Prostate gland (tissue), 2 donors: ENCODE measurements at regions of chr12 and their contacts with region 1.

Region 1: DNA sequence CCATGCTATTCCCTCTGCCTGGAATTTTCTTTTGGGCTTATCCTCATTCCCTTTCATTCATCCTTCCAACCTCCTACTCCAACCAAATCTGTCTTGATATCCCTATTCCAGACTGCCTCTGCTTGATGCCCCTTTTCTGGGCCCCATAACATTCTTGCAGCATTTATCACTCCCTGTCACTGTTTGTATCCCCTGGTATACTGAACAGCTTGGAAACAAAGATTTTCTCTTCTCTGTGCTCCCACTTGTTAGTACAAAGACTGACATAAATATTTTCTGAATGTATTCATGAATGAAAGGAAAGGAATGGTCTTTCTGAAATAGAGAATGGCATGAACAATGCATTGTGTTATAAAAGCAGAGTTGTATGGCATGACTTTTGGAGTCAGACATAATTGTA is 7.5 kb downstream of the IRAK4 start:
- DNase-seq: no peak
- H3K4me3 ChIP-seq: no peak overlapping the region
- H3K27ac ChIP-seq: no peak overlapping the region
- H3K4me1 ChIP-seq: no peaks in the 10 kb centered on the region
- H3K27me3 ChIP-seq: no peaks in the 10 kb centered on the region
- CTCF ChIP-seq: no peak
- POLR2A ChIP-seq: no peak

Region 2: GRCh38 chr12:43143278-43143677 is 623.0 kb before region 1 on chr12:
- intact Hi-C with region 1: no loop called
- DNase-seq: no peak
- H3K4me3 ChIP-seq: no peak overlapping the region
- H3K27ac ChIP-seq: no peak overlapping the region
- H3K4me1 ChIP-seq: no peaks in the 10 kb centered on the region
- H3K27me3 ChIP-seq: no peaks in the 10 kb centered on the region
- CTCF ChIP-seq: no peak
- POLR2A ChIP-seq: no peak

Region 3: GRCh38 chr12:43882578-43883178 is 116.4 kb after region 1 on chr12:
- intact Hi-C with region 1: loop called (anchors 10 kb)
- DNase-seq: peak; percentile 26
- H3K4me3 ChIP-seq: no peak overlapping the region
- H3K27ac ChIP-seq: no peak overlapping the region
- H3K4me1 ChIP-seq: peaks cover 8% of the 10 kb centered on the region
- H3K27me3 ChIP-seq: no peaks in the 10 kb centered on the region
- CTCF ChIP-seq: peak; percentile 13 to 86 (median 70)
- POLR2A ChIP-seq: no peak